ENCODE measurements at regions of chr1 and their contacts with region 1.

Region 1: GRCh38 chr1:159071970-159072582 is 4.5 kb downstream of the AIM2 start:
- H3K4me3 Mint-ChIP-seq: no peak overlapping the region
- H3K27ac Mint-ChIP-seq: no peak overlapping the region
- H3K4me1 Mint-ChIP-seq: peaks cover 47% of the 10 kb centered on the region
- H3K27me3 Mint-ChIP-seq: no peaks in the 10 kb centered on the region

Region 2: GRCh38 chr1:158506369-158506987 is 565.6 kb before region 1 on chr1:
- intact Hi-C with region 1: loop called (anchors 1 kb)
- H3K4me3 Mint-ChIP-seq: no peak overlapping the region
- H3K27ac Mint-ChIP-seq: no peak overlapping the region
- H3K4me1 Mint-ChIP-seq: peaks cover 20% of the 10 kb centered on the region
- H3K27me3 Mint-ChIP-seq: peaks cover 2% of the 10 kb centered on the region

Region 3: DNA sequence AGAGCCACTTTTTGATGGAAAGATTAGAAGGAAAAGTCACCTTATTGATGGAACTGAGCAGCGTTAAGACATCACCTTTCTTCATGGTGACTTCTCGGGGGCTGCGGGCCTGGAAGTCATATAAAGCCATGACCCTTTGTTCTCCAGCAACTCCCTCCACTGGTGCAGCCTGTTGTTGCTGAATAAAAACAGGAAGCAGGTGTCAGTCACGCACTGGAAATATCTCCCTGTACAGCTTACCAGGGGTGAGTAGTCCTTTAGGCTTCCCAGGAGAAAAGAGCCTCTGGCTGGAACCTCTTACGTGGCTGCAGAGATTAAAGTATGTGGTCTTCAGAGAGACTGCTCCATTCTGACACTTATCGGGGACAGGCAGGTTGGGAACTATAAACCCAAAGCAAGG is 417.5 kb before region 1 on chr1:
- intact Hi-C with region 1: loop called (anchors 10 kb)
- H3K4me3 Mint-ChIP-seq: peak overlapping the region; percentile 18
- H3K27ac Mint-ChIP-seq: peak overlapping the region; percentile 42
- H3K4me1 Mint-ChIP-seq: peaks cover 19% of the 10 kb centered on the region
- H3K27me3 Mint-ChIP-seq: peaks cover 2% of the 10 kb centered on the region

Region 4: GRCh38 chr1:158819461-158820443 is 252.3 kb before region 1 on chr1:
- intact Hi-C with region 1: loop called (anchors 10 kb)
- H3K4me3 Mint-ChIP-seq: no peak overlapping the region
- H3K27ac Mint-ChIP-seq: peak overlapping the region; percentile 82
- H3K4me1 Mint-ChIP-seq: peaks cover 52% of the 10 kb centered on the region
- H3K27me3 Mint-ChIP-seq: no peaks in the 10 kb centered on the region

Region 5: GRCh38 chr1:158998781-158999161 is 73.3 kb before region 1 on chr1:
- intact Hi-C with region 1: loop called (anchors 5 kb)
- H3K4me3 Mint-ChIP-seq: no peak overlapping the region
- H3K27ac Mint-ChIP-seq: peak overlapping the region; percentile 40
- H3K4me1 Mint-ChIP-seq: peaks cover 28% of the 10 kb centered on the region
- H3K27me3 Mint-ChIP-seq: no peaks in the 10 kb centered on the region

Region 6: GRCh38 chr1:159015440-159015909 is 56.6 kb before region 1 on chr1:
- intact Hi-C with region 1: loop called (anchors 5 kb)
- H3K4me3 Mint-ChIP-seq: peak overlapping the region; percentile 40
- H3K27ac Mint-ChIP-seq: peak overlapping the region; percentile 92
- H3K4me1 Mint-ChIP-seq: peaks cover 65% of the 10 kb centered on the region
- H3K27me3 Mint-ChIP-seq: no peaks in the 10 kb centered on the region

Region 7: GRCh38 chr1:159229486-159229885 is 157.4 kb after region 1 on chr1:
- intact Hi-C with region 1: no loop called
- H3K4me3 Mint-ChIP-seq: no peak overlapping the region
- H3K27ac Mint-ChIP-seq: no peak overlapping the region
- H3K4me1 Mint-ChIP-seq: peaks cover 18% of the 10 kb centered on the region
- H3K27me3 Mint-ChIP-seq: peaks cover 4% of the 10 kb centered on the region

Measured in dendritic cell treated with granulocyte-macrophage colony-stimulating factor and Interleukin-4, amounts not matched to agents 40 ng/mL and 50 ng/mL, for 4 days (primary cell).